GM13976 (cell line): ENCODE measurements at regions of chr5 and their contacts with region 1.

Region 1: DNA sequence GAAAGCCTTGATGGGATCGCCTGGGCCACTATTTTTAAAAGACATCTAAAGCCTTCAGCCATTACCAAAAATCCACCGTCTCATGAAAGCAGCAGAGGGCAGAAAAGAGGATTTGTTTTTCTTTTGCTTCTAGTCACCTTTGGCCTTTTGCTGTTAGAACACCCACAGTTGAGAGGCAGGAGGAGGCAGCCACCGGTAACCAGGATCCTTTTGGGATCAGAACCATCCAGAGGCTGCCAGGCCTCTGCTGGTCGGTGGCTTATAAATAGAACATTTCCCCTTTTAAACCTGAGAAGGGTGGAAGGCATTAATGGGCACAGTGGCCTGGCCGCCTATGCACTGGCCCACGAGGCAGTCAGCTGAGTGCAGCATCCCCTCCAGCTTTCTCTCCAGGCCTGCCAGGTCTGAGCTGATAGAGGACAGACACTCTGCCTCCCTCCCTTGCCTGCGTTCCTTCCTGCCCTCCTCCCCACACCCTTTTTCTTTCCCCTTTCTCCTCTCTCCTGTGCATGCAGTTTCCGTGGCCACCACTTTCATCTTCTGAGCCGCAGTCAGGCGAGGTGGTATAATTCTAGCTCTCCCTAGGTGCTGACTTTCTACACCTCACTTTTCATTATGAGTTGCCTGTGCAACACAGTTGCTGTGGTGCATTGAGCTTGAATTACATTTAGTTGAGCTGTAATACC is 253.4 kb downstream of the ARHGAP26 start:
- DNase-seq: peak; percentile 41
- CTCF ChIP-seq: no peak

Region 2: DNA sequence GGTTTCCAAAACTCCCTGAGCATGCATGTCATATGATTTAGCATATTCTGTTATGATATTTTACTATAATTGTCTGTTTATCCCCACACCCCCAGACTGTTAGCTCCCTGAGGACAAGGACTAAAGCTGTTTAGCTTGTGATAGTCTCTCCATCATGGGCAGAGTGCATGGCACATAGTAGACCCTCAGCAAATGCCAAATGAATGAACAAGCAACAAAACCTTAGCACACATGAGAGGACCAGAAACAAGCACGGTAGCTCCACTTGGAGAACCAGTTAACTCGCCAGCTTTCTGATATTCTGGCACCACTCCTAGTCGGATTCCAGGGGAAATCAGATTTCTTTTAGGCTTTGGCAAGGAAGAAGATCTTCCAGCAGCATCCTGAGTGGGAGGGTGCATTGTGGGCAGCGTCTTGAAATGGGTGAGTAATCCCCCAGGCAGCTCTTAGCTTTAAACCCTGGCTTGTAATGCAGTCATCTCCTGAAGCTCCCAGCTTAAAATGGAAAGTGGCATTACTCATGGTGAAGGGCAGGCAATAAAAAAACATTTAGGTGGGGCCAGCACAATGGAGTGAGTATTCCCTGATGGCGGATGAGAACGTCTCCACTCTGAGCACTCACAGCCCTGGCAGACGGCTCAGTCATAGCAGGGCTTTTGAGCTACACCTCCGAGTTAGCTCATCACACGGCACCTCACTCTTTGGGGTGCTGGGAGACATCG is 378.8 kb before region 1 on chr5:
- in situ Hi-C with region 1: no loop called
- DNase-seq: no peak
- CTCF ChIP-seq: no peak

Region 3: GRCh38 chr5:143057580-143057999 is 34.0 kb after region 1 on chr5:
- in situ Hi-C with region 1: loop called (anchors 5 kb)
- DNase-seq: peak; percentile 29
- CTCF ChIP-seq: no peak

Region 4: DNA sequence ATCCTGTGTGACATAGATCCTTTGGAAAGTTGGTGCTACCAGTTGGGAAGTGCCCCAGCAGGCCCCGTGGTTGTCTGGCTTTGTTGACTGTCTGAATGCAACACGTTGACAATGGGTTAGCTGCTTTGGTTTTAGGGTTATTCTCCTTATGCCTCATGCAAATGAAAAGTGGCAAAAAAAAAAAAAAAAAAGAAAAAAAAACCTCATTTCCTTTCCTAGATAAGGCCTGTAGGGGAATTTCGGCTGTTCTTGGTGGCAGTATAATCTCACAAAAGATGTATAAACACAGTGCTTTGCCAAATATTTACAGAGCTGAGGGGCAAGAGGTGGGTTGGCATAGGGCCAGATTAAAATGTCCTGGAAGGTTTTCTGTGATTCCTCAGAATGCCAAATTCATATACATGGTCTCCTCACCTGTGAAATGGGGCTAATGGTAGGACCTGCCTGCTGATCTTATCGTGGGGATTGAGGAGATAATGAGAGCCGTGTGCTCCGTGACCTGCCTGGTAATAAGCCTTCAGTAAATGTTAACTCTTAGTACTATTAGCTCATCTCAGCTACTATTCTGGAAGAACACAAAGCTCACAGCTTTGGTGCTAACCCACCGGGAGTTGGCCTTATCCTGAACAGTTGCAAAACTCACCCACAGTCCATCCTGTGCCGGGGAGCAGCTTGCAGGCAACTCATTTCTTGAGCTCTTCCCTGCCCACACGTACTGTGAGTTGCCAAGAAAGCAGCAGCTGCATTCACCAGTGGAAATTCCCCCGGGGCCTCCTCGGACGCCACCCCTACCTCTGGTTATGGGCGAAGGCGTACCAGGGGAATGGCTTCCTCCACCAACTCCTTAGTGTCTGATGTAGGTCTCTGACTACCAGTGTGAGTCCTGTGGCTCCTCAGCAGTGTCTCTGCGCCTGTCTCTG is 159.6 kb after region 1 on chr5:
- in situ Hi-C with region 1: loop called (anchors 10 kb)
- DNase-seq: peak; percentile 42
- CTCF ChIP-seq: no peak

Region 5: GRCh38 chr5:143290125-143290524 is 266.6 kb after region 1 on chr5:
- in situ Hi-C with region 1: no loop called
- DNase-seq: no peak
- CTCF ChIP-seq: no peak